Esophagus muscularis mucosa (tissue), 4 donors: ENCODE measurements at regions of chr11 and their contacts with region 1.

Region 1: DNA sequence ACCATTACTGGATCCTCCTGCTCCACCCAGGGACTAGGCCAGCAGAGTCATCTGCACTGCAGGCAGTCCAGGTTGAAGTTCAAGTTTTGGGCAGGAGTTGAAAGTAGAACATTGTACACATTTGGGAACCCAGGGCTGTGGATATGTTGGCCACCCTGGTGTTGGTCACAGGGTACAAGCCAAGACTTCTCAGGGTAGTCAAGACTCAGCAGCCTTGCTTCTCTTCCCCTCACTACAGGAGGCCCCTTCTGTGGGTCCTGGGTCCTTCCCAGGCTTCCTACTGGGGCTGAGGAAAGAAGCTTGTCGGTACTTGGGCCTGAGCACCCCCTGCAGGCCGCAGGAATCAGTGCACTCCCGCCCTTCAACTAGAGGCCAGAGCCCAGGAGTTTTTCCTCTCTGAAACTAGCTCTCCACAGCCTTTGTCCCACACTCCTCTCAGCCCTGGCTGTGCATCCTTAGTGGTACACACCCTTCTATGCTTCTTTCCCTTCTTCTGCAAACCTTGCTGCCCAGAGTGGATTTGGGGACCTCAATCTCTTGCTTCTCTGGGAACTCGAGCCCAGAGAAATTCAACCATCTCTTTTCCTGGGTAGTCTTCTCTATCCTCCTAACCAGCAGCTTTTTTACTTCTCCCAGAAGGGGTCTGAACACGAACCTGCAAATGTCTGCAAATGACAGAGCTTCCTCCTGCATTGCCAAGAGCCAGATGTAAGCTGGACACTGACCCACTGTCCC is 2.6 kb upstream of the HPX start:
- DNase-seq: no peak
- H3K4me3 ChIP-seq: no peak overlapping the region
- H3K27ac ChIP-seq: no peak overlapping the region
- H3K4me1 ChIP-seq: no peaks in the 10 kb centered on the region
- H3K27me3 ChIP-seq: no peaks in the 10 kb centered on the region
- CTCF ChIP-seq: peak; percentile 79 to 89 (median 87)
- EP300 ChIP-seq: no peak
- POLR2A ChIP-seq: no peak

Region 2: DNA sequence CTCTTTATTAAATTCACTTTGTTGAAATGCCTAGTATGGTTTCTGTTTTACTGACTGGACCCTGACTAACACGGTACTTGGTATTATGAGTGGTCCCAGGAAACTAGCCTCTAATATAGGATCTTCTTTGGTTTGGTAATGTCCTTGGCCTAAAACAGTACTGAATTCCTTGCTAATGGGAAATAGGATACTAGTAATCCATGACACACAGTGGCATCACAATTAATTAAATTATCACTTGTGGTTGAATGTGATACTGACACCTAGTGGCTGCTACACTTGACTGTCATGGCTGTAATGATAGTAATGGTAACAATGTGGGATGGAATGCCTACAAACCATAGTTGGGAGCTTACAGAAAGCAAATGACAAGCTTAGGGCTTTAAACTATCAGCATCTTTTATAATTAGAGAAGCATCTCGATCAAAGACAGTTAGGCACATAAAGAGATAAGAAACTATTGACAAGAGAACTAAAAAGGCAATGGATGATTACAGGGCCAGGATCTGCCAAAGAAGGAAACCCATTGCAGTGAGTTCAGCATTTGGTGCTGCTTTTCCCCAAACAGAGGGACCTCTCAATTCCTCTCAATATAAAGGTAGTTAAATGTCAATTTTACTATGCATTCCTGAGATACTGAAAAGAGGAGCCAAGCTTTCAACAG is 62.3 kb after region 1 on chr11:
- intact Hi-C with region 1: loop called (anchors 2 kb)
- DNase-seq: no peak
- H3K4me3 ChIP-seq: no peak overlapping the region
- H3K27ac ChIP-seq: peak overlapping the region in 1 of 4 donors; percentile 33
- H3K4me1 ChIP-seq: peaks cover 0 to 8% (median 0%) of the 10 kb centered on the region in 4 donors
- H3K27me3 ChIP-seq: no peaks in the 10 kb centered on the region
- CTCF ChIP-seq: peak; percentile 62 to 81 (median 64)
- EP300 ChIP-seq: no peak
- POLR2A ChIP-seq: no peak